B cell (primary cell): ENCODE measurements at regions of chr19 and their contacts with region 1.

Region 1: DNA sequence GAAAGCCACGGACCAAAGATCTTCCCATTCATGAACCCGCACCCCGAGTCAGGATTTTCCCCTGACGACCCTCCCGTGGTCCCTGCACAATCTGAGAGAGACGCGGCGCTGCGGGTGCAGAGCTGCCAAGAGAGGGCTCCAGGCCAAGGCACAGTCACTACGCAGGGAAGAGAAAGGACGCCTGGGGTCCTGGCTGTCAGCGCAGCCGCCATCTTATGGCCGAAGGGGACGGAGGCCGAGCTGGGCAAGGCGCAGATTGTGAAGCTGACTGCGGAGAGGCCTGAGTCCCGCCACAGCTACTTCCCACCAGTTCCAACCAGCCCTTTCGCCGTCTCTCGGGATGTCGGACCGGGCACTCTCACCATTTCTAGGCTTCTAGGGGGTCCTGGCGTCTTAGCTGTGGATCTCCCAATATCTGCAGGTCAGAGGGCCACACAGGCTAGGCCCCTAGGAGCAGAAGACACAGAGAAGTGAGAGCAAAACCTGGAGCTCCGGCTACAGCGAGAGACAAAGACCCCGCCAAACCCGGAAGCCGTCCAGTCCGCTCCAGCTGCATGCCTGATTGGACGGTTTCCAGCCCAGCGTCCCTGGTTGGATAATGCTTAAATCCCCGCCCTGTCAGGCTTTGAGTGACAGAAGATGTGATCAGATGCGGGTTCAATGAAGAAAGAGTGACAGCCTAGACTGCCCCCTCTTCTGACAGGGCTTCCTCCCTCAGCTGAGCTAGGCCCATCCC is at the start of gene ZNF100:
- DNase-seq: peak; percentile 89
- ATAC-seq: peak; percentile 97
- H3K4me3 ChIP-seq: peak within 1 kb of the TSS; percentile 77 to 91 (median 79)
- H3K4me3 Mint-ChIP-seq: peak within 1 kb of the TSS; percentile 96
- H3K27ac ChIP-seq: peak within 1 kb of the TSS; percentile 82 to 90
- H3K27ac Mint-ChIP-seq: peak within 1 kb of the TSS; percentile 90
- H3K4me1 ChIP-seq: peaks cover 9 to 10% of the 10 kb centered on the region in 2 donors
- H3K4me1 Mint-ChIP-seq: peaks cover 17% of the 10 kb centered on the region
- H3K27me3 ChIP-seq: no peaks in the 10 kb centered on the region
- H3K27me3 Mint-ChIP-seq: no peaks in the 10 kb centered on the region
- CTCF ChIP-seq: no peak
- total RNA-seq, gene ZNF100: 16.0 and 21.6 TPM in 2 replicates

Region 2: GRCh38 chr19:21698215-21698614 is 69.0 kb before region 1 on chr19:
- CTCF ChIA-PET with region 1: no interaction called
- POLR2A ChIA-PET with region 1: no interaction called
- intact Hi-C with region 1: no loop called
- DNase-seq: peak; percentile 44
- ATAC-seq: no peak
- H3K4me3 ChIP-seq: no peak overlapping the region
- H3K4me3 Mint-ChIP-seq: no peak overlapping the region
- H3K27ac ChIP-seq: no peak overlapping the region
- H3K27ac Mint-ChIP-seq: no peak overlapping the region
- H3K4me1 ChIP-seq: no peaks in the 10 kb centered on the region
- H3K4me1 Mint-ChIP-seq: no peaks in the 10 kb centered on the region
- H3K27me3 ChIP-seq: no peaks in the 10 kb centered on the region
- H3K27me3 Mint-ChIP-seq: peaks cover 5% of the 10 kb centered on the region
- CTCF ChIP-seq: peak; percentile 68

Region 3: GRCh38 chr19:21709464-21709863 is 57.8 kb before region 1 on chr19:
- CTCF ChIA-PET with region 1: no interaction called
- POLR2A ChIA-PET with region 1: no interaction called
- intact Hi-C with region 1: no loop called
- DNase-seq: no peak
- ATAC-seq: no peak
- H3K4me3 ChIP-seq: no peak overlapping the region
- H3K4me3 Mint-ChIP-seq: no peak overlapping the region
- H3K27ac ChIP-seq: no peak overlapping the region
- H3K27ac Mint-ChIP-seq: no peak overlapping the region
- H3K4me1 ChIP-seq: no peaks in the 10 kb centered on the region
- H3K4me1 Mint-ChIP-seq: no peaks in the 10 kb centered on the region
- H3K27me3 ChIP-seq: no peaks in the 10 kb centered on the region
- H3K27me3 Mint-ChIP-seq: no peaks in the 10 kb centered on the region
- CTCF ChIP-seq: no peak

Region 4: GRCh38 chr19:21851596-21852345 is 84.5 kb after region 1 on chr19:
- CTCF ChIA-PET with region 1: interaction called, 6 read pairs
- POLR2A ChIA-PET with region 1: interaction called, 7 read pairs
- intact Hi-C with region 1: loop called (anchors 1 kb)
- DNase-seq: peak; percentile 90
- ATAC-seq: peak; percentile 99
- H3K4me3 ChIP-seq: peak overlapping the region; percentile 68 to 98 (median 96)
- H3K4me3 Mint-ChIP-seq: peak overlapping the region; percentile 95
- H3K27ac ChIP-seq: peak overlapping the region; percentile 74 to 93
- H3K27ac Mint-ChIP-seq: peak overlapping the region; percentile 91
- H3K4me1 ChIP-seq: peaks cover 5 to 15% of the 10 kb centered on the region in 2 donors
- H3K4me1 Mint-ChIP-seq: peaks cover 21% of the 10 kb centered on the region
- H3K27me3 ChIP-seq: no peaks in the 10 kb centered on the region
- H3K27me3 Mint-ChIP-seq: no peaks in the 10 kb centered on the region
- CTCF ChIP-seq: no peak